Adrenal gland (tissue), 19 donors: ENCODE measurements at regions of chr15 and their contacts with region 1.

Region 1: DNA sequence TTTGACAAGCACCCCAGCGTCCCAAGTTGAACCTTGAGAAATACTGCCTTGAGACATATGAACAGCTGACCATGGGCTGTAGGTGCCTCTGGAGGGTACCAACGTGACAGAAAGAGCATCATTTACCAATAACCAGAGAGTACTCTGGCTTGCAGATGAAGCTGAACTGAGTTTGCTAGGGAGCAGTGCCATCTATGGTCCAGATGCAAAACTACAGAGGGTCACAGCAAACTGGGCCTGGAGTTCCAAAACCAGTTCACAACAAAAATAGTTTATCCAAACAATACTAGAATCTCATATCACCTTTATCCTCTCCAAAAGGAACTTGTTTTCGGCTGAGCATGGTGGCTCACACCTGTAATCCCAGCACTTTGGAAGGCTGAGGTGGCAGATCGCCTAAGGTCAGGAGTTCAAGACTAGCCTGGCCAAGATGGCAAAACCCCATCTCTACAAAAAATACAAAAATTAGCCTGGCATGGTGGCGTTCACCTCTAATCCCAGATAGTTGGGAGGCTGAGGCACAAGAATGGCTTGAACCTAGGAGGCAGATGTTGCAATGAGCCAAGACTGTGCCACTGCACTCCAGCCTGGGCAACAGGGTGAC is 69.3 kb downstream of the CHAC1 start:
- DNase-seq: peak; percentile 23 to 71 (median 44)
- H3K4me3 ChIP-seq: no peak overlapping the region
- H3K27ac ChIP-seq: no peak overlapping the region
- H3K4me1 ChIP-seq: peaks cover 0 to 14% of the 10 kb centered on the region in 2 donors
- H3K27me3 ChIP-seq: no peaks in the 10 kb centered on the region
- CTCF ChIP-seq: peak; percentile 27 to 77 (median 68)
- POLR2A ChIP-seq: no peak

Region 2: DNA sequence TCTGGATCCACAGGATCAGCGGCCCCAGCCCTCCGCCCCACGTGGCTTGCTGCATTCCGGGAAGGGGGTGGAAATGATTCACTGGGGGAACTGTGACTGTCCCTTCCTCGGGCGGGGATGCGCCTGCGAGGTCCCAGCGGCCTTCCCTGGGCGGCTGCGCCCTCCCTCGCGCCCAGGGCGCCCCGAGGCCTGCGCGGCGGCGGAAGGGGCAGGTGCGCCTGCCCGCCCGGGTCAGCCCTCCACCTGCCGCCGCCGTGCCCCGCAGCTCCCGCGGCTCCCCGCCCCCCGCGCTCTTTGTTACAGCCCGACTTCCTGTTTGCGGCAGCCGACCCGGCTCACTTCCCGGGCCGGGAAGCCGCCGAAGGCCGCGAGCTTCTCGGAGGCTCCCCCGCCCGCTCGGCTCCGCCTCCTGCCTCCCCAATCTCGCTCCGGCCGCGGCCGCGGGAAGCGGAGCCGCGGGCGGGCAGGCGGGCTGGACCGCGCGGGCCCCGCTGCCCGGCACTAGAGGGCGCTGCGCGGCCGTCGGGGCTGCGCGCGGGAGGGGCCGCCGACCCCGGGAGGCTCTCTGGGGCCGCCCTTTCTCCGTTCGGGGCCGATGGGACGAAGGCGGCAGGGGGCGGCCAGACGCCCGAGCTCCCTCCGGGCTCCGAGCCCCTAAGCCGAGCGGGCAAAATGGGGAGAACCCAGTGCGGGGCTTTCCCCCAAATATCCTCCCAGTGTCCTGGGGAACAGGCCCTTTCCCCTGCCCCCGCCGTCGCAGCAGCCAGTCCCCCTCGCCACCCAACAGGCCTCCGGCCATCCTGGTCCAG is 80.9 kb before region 1 on chr15:
- intact Hi-C with region 1: loop called in 1 of 2 experiments (anchors 10 kb)
- DNase-seq: peak; percentile 78 to 92 (median 87)
- H3K4me3 ChIP-seq: peak overlapping the region in 2 of 4 donors; percentile 42 to 70
- H3K27ac ChIP-seq: peak overlapping the region; percentile 53 to 97 (median 89)
- H3K4me1 ChIP-seq: peaks cover 12 to 15% of the 10 kb centered on the region in 2 donors
- H3K27me3 ChIP-seq: no peaks in the 10 kb centered on the region
- CTCF ChIP-seq: peak in 4 of 6 experiments; percentile 48 to 90 (median 72)
- POLR2A ChIP-seq: peak; percentile 65 to 79

Region 3: DNA sequence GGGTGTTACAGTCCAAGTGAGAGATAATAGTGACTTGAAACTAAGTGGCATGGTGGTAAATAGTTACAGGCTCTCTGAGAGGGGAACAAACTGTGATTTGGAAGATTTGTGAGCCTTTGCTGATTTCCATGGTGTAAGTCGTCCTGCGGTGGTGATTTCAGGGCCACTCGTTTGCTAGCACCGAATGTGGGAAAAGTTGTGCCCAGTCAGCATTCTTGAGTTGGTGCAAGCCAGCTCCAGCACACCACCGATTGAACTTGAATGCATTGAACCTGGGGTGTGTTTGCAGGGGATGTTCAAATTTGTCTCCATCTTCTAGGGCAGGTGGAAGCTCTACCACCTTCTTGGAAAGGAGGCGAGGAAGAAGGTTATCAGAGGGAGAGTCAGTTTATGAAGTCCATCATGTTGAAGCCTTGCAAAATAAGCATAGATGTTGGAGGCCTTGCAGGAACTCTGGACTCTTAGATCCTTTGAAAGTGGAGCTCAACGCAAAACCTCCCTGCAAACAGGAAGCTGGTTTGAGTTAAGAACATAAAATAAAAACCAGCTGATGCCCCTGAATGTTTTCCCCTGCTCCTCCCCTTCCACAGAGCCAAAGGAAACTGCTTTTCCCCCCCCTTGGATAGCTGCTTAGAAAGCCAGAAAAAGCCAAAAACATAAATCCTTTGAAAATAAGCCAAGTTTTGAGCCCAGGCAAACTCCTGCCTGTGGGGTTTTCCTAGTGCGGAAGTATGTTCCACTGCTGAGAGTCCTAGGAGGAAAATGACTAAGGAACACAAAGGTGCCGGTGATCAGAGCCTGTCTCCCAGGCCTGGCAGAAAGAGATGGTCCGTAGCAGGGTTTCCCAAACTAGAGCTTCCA is 773.6 kb after region 1 on chr15:
- intact Hi-C with region 1: no loop called
- DNase-seq: no peak
- H3K4me3 ChIP-seq: no peak overlapping the region
- H3K27ac ChIP-seq: peak overlapping the region in 3 of 5 donors; percentile 3 to 53 (median 17)
- H3K4me1 ChIP-seq: peaks cover 10 to 37% of the 10 kb centered on the region in 2 donors
- H3K27me3 ChIP-seq: no peaks in the 10 kb centered on the region
- CTCF ChIP-seq: no peak
- POLR2A ChIP-seq: no peak